ENCODE measurements at regions of chr1 and their contacts with region 1.

Region 1: DNA sequence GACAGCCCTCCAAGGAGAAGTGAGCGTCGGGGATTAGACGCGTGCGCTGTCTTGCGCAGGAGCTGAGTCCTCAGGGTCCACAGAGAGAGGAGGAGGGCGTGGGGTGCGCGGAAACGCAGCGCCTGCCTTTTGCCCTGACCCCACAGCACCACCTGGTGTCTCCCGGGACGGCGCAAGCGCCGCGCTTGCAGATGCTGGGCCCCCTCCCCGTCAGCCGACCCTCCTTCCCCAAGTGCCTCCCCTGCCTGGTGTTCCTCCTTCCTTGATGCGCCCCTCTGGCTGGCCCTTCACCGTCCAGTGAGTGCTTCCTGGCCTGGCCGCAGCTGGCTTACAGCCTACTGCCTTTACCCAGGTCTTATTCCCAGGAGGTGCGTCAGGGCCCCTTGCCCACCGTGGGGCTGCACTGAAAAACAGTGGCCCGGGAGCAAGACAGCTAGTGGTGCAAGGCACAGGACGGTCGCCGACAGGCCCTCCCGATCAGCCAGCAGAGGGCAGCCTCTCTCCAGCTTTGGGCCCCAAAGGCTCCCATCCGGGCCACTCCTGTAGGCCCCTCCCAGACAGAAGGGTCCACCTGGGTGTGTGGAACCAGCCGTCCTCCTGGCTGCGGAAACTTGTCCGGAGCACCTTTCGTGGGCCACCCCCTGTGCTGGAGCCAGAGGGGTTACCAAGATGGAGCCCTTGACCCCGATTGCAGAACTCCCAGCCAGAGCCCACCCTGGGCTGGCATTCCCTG is 12.9 kb upstream of the PHLDA3 start:
- DNase-seq: peak; percentile 88
- H3K4me3 Mint-ChIP-seq: peak overlapping the region; percentile 62
- H3K27ac Mint-ChIP-seq: no peak overlapping the region
- H3K4me1 Mint-ChIP-seq: peaks cover 43% of the 10 kb centered on the region
- H3K27me3 Mint-ChIP-seq: peaks cover 39% of the 10 kb centered on the region

Region 2: GRCh38 chr1:201436393-201436792 is 45.5 kb before region 1 on chr1:
- CTCF ChIA-PET with region 1: interaction called, 55 read pairs
- DNase-seq: no peak
- H3K4me3 Mint-ChIP-seq: no peak overlapping the region
- H3K27ac Mint-ChIP-seq: no peak overlapping the region
- H3K4me1 Mint-ChIP-seq: peaks cover 5% of the 10 kb centered on the region
- H3K27me3 Mint-ChIP-seq: peaks cover 34% of the 10 kb centered on the region

Region 3: GRCh38 chr1:201468844-201469511 is 12.9 kb before region 1 on chr1 and contains the start of gene PHLDA3:
- CTCF ChIA-PET with region 1: interaction called, 32 read pairs
- DNase-seq: peak; percentile 80
- H3K4me3 Mint-ChIP-seq: peak within 1 kb of the TSS; percentile 86
- H3K27ac Mint-ChIP-seq: peak within 1 kb of the TSS; percentile 80
- H3K4me1 Mint-ChIP-seq: peaks cover 26% of the 10 kb centered on the region
- H3K27me3 Mint-ChIP-seq: peaks cover 65% of the 10 kb centered on the region

Region 4: DNA sequence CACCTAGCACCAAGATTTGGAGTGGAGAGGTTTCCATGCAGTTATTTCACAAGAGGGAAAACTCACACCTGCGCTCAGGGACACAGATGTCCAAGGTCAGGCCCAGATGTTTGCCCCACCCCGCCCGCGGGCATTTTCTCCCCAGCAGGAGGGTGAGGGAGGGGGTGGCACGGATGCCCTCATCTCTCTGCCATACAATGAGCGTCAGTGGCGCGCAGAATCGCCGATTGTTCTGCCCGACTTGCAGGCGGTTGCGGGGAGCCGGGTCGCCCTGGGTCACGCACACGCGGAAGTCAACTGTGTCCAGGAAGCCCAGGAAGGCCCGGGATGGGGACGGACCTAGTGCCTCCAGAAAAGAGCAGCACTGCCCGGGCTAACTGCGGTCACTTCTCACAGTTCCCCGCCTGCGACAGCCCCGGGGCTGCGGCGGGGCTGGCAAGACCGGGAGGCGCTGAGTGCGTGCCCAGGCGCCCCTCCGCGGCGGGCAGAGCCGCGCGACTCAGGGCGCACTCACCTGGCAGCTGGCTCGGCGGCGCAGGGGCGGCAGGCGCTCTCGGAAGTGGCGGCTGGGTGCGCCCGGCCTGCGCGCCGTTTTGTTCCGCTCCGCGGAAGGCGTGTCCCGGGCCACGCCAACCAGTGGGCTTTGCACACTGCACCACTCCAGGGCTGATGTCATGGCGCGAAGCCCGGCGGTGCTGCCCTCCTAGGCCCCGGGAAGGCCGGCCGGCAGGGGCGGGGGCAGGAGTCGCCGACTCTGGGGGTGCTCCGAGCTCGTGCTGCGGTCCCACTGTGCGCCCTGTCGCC is 24.8 kb after region 1 on chr1 and contains the start of gene CSRP1:
- CTCF ChIA-PET with region 1: interaction called, 349 read pairs
- DNase-seq: peak; percentile 91
- H3K4me3 Mint-ChIP-seq: peak within 1 kb of the TSS; percentile 96
- H3K27ac Mint-ChIP-seq: peak within 1 kb of the TSS; percentile 91
- H3K4me1 Mint-ChIP-seq: peaks cover 69% of the 10 kb centered on the region
- H3K27me3 Mint-ChIP-seq: no peaks in the 10 kb centered on the region

Region 5: DNA sequence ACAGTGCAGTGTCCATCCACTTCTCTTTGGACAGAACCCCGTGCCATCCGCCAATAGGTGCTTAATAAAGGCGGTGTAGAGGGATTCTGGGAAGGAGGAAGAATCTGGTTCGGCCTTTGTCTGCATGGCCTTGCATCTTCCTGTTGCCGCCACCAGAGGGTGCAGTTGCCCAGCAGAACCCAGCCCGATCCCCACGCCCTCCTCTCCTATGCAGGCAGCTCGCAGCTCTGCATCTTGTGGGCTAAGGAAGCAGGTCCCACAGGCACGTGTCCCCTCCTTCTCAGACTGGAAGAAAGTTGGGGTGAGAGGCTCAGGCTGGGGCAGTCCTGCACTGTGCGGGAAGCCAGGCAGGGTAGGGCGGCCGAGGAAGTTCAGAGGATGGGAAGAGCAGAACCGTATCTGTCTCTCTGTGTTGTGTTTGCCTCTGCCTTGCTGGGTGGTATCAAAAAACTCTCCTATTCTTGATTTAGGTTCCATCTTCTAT is 77.8 kb after region 1 on chr1:
- CTCF ChIA-PET with region 1: interaction called, 14 read pairs
- DNase-seq: peak; percentile 79
- H3K4me3 Mint-ChIP-seq: no peak overlapping the region
- H3K27ac Mint-ChIP-seq: no peak overlapping the region
- H3K4me1 Mint-ChIP-seq: peaks cover 6% of the 10 kb centered on the region
- H3K27me3 Mint-ChIP-seq: peaks cover 20% of the 10 kb centered on the region

Measured in activated naive CD4-positive, alpha-beta T cell treated with anti-CD3 and anti-CD28 coated beads, Interleukin-2, amount 10 ng/mL, durations not matched to agents 7 days and 5 days (primary cell).